Panc1 (cell line): ENCODE measurements at regions of chr4 and their contacts with region 1.

Region 1: GRCh38 chr4:87390891-87391575 is at the start of gene HSD17B11:
- DNase-seq: peak; percentile 78
- ATAC-seq: peak; percentile 98
- H3K4me3 ChIP-seq: peak within 1 kb of the TSS; percentile 92 to 93
- H3K27ac ChIP-seq: peak within 1 kb of the TSS; percentile 95
- H3K4me1 ChIP-seq: peaks cover 8% of the 10 kb centered on the region; the same call in 1 of the 2 replicates
- H3K27me3 ChIP-seq: no peaks in the 10 kb centered on the region
- CTCF ChIP-seq: no peak
- total RNA-seq, gene HSD17B11: 34.9 TPM

Region 2: DNA sequence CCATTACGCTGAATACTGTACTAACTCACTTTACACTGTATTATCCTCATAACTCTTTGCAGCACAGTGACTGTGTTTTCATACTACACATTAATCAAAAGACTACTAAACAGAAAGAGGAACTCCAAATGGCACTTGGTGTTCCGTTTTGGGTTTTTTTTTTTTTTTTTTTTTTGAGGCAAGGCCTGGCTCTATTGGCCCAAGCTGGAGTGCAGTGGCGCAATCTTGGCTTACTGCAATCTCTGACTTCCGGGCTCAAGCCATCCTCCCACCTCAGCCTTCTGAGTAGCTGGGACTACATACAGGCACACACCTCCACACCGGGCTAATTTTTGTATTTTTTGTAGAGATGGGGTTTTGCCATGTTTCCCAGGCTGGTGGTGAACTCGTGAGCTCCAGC is 181.3 kb before region 1 on chr4:
- CTCF ChIA-PET with region 1: no interaction called
- POLR2A ChIA-PET with region 1: no interaction called
- in situ Hi-C with region 1: no loop called
- intact Hi-C with region 1: no loop called
- DNase-seq: no peak
- ATAC-seq: no peak
- H3K4me3 ChIP-seq: no peak overlapping the region
- H3K27ac ChIP-seq: no peak overlapping the region
- H3K4me1 ChIP-seq: no peaks in the 10 kb centered on the region; the same call in 1 of the 2 replicates
- H3K27me3 ChIP-seq: no peaks in the 10 kb centered on the region
- CTCF ChIP-seq: no peak

Region 3: DNA sequence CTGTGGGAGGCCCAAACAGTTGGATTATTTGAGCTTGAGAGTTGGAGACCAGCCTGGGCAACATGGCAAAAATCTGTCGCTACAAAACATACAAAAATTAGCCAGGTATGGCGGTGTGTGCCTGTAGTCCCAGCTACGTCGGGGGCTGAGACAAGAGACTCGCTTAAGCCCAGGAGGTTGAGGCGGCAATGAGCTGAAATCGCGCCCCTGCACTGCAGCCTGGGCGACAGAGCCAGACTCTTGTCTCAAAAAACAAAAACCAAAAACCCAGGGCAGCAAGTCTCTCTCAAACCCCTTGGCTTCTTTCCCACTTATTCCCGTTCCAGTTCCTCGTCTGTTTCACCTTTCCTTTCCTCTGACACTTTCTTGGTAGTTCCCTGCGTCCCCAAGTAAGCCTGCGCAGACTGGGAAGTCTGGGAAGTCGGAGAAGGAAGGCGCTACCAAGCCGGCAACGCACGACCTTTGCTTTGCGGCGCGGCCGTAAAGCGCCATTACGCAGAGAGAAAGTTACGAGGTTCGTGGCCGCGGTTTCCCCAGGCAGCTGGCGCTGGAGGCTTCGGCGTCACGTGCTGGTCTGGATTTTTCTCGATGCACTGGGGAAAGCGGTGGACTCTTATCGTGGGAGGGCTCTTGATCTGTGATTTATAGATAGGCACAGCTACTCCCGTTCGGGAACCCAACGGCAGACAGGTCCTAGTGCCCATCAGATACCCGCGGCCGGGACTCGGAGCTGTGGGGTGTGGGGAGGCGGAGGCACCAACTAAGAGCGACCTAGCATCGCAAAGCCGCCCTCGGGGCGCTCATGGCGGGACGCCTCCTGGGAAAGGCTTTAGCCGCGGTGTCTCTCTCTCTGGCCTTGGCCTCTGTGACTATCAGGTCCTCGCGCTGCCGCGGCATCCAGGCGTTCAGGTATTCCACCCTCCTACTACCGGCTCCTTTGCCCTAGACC is 31.3 kb after region 1 on chr4 and contains the start of gene NUDT9:
- CTCF ChIA-PET with region 1: interaction called, 6 read pairs
- POLR2A ChIA-PET with region 1: no interaction called
- in situ Hi-C with region 1: no loop called
- intact Hi-C with region 1: loop called (anchors 5 kb)
- DNase-seq: peak; percentile 86
- ATAC-seq: peak; percentile 94
- H3K4me3 ChIP-seq: peak within 1 kb of the TSS; percentile 58 to 82
- H3K27ac ChIP-seq: peak within 1 kb of the TSS; percentile 86
- H3K4me1 ChIP-seq: peaks cover 18% of the 10 kb centered on the region
- H3K27me3 ChIP-seq: no peaks in the 10 kb centered on the region
- CTCF ChIP-seq: no peak
- total RNA-seq, gene NUDT9: 21.7 TPM

Region 4: GRCh38 chr4:87697272-87697671 is 306.2 kb after region 1 on chr4:
- CTCF ChIA-PET with region 1: no interaction called
- POLR2A ChIA-PET with region 1: no interaction called
- in situ Hi-C with region 1: no loop called
- intact Hi-C with region 1: no loop called
- DNase-seq: no peak
- ATAC-seq: no peak
- H3K4me3 ChIP-seq: no peak overlapping the region
- H3K27ac ChIP-seq: no peak overlapping the region
- H3K4me1 ChIP-seq: no peaks in the 10 kb centered on the region
- H3K27me3 ChIP-seq: no peaks in the 10 kb centered on the region
- CTCF ChIP-seq: no peak

Region 5: GRCh38 chr4:88284439-88285234 is 893.6 kb after region 1 on chr4 and contains the start of gene PPM1K:
- CTCF ChIA-PET with region 1: no interaction called
- POLR2A ChIA-PET with region 1: interaction called, 12 read pairs
- in situ Hi-C with region 1: no loop called
- intact Hi-C with region 1: no loop called
- DNase-seq: peak; percentile 76
- ATAC-seq: peak; percentile 97
- H3K4me3 ChIP-seq: peak within 1 kb of the TSS; percentile 69 to 79
- H3K27ac ChIP-seq: peak within 1 kb of the TSS; percentile 34
- H3K4me1 ChIP-seq: no peaks in the 10 kb centered on the region; the same call in 1 of the 2 replicates
- H3K27me3 ChIP-seq: peaks cover 2% of the 10 kb centered on the region; the same call in 1 of the 2 replicates
- CTCF ChIP-seq: 0 out of 2 replicates have a peak, but pooled peaks have one; percentile 9
- total RNA-seq, gene PPM1K: 2.1 TPM